ENCODE measurements at regions of chr1 and their contacts with region 1.

Region 1: GRCh38 chr1:62746085-62746808 is 37.7 kb upstream of the ATG4C start:
- DNase-seq: no peak
- ATAC-seq: no peak
- H3K4me3 Mint-ChIP-seq: no peak overlapping the region
- H3K27ac Mint-ChIP-seq: no peak overlapping the region
- H3K4me1 Mint-ChIP-seq: no peaks in the 10 kb centered on the region
- H3K27me3 Mint-ChIP-seq: peaks cover 33% of the 10 kb centered on the region

Region 2: GRCh38 chr1:62175568-62176179 is 570.6 kb before region 1 on chr1:
- CTCF ChIA-PET with region 1: interaction called, 16 read pairs
- DNase-seq: peak; percentile 46
- ATAC-seq: peak; percentile 33
- H3K4me3 Mint-ChIP-seq: no peak overlapping the region
- H3K27ac Mint-ChIP-seq: no peak overlapping the region
- H3K4me1 Mint-ChIP-seq: no peaks in the 10 kb centered on the region
- H3K27me3 Mint-ChIP-seq: peaks cover 3% of the 10 kb centered on the region

Region 3: DNA sequence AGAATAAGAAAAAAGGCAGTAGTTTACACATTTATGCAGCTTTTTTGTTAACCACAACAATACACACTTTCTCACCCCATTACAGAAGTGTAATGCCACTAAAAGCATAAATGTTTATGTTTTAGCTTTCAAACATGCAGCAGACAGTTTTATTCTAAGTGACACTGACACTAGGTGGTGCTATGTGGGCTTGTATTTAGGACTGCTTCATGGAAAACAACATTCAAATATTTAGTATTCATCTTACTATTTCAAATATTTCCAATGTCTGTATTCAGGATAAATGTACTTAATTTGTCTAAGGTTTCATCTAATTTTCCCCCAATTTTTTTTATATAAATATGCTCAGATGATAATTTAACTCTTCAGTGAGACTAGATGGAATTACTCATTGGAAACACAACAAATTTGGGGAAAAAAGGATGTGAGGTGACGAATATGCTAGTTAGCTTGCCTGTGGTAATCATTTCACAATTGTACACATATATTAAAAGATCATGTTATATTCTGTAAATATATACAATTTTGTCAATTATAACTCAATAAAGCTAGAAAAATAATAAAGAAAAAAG is 238.0 kb before region 1 on chr1:
- CTCF ChIA-PET with region 1: interaction called, 37 read pairs
- DNase-seq: no peak
- ATAC-seq: no peak
- H3K4me3 Mint-ChIP-seq: no peak overlapping the region
- H3K27ac Mint-ChIP-seq: no peak overlapping the region
- H3K4me1 Mint-ChIP-seq: no peaks in the 10 kb centered on the region
- H3K27me3 Mint-ChIP-seq: no peaks in the 10 kb centered on the region

Measured in activated CD8-positive, alpha-beta memory T cell treated with anti-CD3 and anti-CD28 coated beads, Interleukin-2, amount 10 ng/mL, durations not matched to agents 7 days and 5 days (primary cell).